ENCODE measurements at regions of chr5 and their contacts with region 1.

Region 1: DNA sequence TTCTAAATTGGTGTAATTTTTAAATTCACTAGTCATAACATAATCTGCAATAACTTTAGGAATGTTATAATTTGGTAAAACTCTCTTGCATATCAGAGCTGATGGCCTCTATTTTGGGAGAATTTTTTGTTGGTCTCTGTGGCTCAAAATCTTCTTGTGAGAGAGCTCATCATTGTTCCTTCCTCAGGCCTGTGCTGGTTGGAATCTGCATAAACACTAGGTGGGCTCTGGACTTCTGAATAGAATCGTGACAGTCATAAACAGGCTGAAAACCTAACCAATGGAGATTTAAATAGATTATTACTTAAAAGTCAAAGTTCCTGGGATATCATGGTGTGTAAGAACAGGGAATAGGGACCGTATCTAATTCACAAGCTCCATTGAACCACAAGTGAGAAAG is 1129.6 kb downstream of the CDH12 start:
- DNase-seq: no peak
- H3K4me3 Mint-ChIP-seq: no peak overlapping the region
- H3K27ac Mint-ChIP-seq: no peak overlapping the region
- H3K4me1 Mint-ChIP-seq: no peaks in the 10 kb centered on the region
- H3K27me3 Mint-ChIP-seq: no peaks in the 10 kb centered on the region
- CTCF ChIP-seq: no peak

Region 2: GRCh38 chr5:21646469-21646868 is 77.0 kb before region 1 on chr5:
- CTCF ChIA-PET with region 1: no interaction called
- POLR2A ChIA-PET with region 1: no interaction called
- intact Hi-C with region 1: loop called (anchors 10 kb)
- DNase-seq: peak; percentile 40
- H3K4me3 Mint-ChIP-seq: no peak overlapping the region
- H3K27ac Mint-ChIP-seq: no peak overlapping the region
- H3K4me1 Mint-ChIP-seq: peaks cover 4% of the 10 kb centered on the region
- H3K27me3 Mint-ChIP-seq: no peaks in the 10 kb centered on the region
- CTCF ChIP-seq: no peak

Region 3: DNA sequence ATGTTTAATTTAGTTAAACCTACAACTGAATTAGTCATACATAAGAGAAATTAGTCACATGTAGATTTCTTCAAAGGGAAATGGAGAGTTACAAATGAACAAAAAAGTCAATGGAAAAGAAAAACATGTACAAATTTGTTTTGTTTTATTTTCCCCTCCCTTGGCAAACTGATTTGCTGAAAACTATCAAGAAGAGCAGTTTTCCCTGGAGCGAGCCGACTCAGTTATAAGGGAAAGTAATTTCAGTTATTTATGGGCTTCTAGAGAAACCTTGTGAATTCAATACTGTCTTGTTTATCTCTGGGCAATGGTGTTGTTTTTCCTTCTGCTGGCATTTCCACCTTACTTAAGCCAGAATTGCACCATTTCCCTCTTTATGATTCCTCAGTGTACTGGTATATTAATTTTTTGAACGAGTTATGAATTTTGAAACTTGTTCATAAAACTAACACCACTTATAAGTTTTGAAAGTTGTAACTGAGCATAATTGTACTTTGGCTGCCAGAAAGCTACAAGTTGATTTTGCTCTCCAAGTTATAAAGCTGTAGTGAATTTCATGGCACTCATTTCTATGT is 33.9 kb before region 1 on chr5:
- CTCF ChIA-PET with region 1: no interaction called
- POLR2A ChIA-PET with region 1: no interaction called
- intact Hi-C with region 1: no loop called
- DNase-seq: peak; percentile 27
- H3K4me3 Mint-ChIP-seq: no peak overlapping the region
- H3K27ac Mint-ChIP-seq: peak overlapping the region; percentile 69
- H3K4me1 Mint-ChIP-seq: peaks cover 15% of the 10 kb centered on the region
- H3K27me3 Mint-ChIP-seq: no peaks in the 10 kb centered on the region
- CTCF ChIP-seq: no peak

Measured in MCF 10A (cell line).